ENCODE measurements at regions of chr6 and their contacts with region 1.

Region 1: DNA sequence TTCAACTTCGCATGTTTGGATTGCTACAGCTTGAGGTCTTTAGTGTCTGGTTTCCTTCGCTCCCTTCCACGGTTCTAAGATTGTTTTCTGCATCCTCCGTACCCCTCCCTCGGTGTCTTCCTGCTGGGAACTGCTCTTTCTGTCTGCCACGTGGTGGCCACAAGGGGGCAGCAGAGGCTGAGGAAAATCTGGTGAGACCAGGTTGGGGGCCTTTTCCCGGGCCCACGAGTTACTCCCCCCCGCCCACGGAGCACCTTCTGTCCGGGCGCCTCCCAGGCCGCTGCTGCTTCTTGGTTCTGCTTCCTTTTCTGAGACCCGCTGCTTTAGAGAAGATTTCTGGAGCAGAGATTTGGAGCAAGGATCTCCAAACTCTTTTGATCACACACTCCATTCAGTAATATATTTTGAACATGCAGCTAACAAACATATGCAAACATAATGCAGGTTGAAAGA is 21.1 kb upstream of the NOTCH4 start:
- DNase-seq: peak; percentile 86 to 89
- ATAC-seq: peak; percentile 90 to 96 (median 93)
- H3K4me3 ChIP-seq: peak overlapping the region in 5 of 10 donors; percentile 13 to 31 (median 20)
- H3K27ac ChIP-seq: peak overlapping the region; percentile 29 to 89 (median 70)
- H3K4me1 ChIP-seq: peaks cover 4 to 20% (median 9%) of the 10 kb centered on the region in 9 donors
- H3K27me3 ChIP-seq: no peaks in the 10 kb centered on the region
- CTCF ChIP-seq: peak; percentile 90 to 96 (median 92)

Region 2: GRCh38 chr6:32118782-32119628 is 126.0 kb before region 1 on chr6:
- intact Hi-C with region 1: loop called in 2 of 10 experiments (anchors 5 to 10 kb)
- DNase-seq: peak; percentile 86 to 88
- ATAC-seq: peak; percentile 73 to 88 (median 80)
- H3K4me3 ChIP-seq: no peak overlapping the region
- H3K27ac ChIP-seq: peak overlapping the region in 9 of 10 donors; percentile 3 to 68 (median 51)
- H3K4me1 ChIP-seq: peaks cover 7 to 34% (median 20%) of the 10 kb centered on the region in 9 donors
- H3K27me3 ChIP-seq: no peaks in the 10 kb centered on the region
- CTCF ChIP-seq: peak; percentile 80 to 97 (median 94)

Region 3: GRCh38 chr6:32393665-32394420 is 148.9 kb after region 1 on chr6:
- intact Hi-C with region 1: loop called in 5 of 10 experiments (anchors 2 to 10 kb)
- DNase-seq: peak in 1 of 2 donors; percentile 59
- ATAC-seq: peak; percentile 88 to 99 (median 96)
- H3K4me3 ChIP-seq: no peak overlapping the region
- H3K27ac ChIP-seq: peak overlapping the region in 9 of 10 donors; percentile 23 to 87 (median 61)
- H3K4me1 ChIP-seq: peaks cover 0 to 19% (median 3%) of the 10 kb centered on the region in 9 donors
- H3K27me3 ChIP-seq: peaks cover 0 to 10% (median 0%) of the 10 kb centered on the region in 7 donors
- CTCF ChIP-seq: peak in 3 of 9 donors; percentile 9 to 43 (median 28)

Region 4: GRCh38 chr6:32488083-32488482 is 243.1 kb after region 1 on chr6:
- intact Hi-C with region 1: no loop called
- DNase-seq: no peak
- ATAC-seq: peak in 3 of 8 donors; percentile 38 to 43 (median 41)
- H3K4me3 ChIP-seq: no peak overlapping the region
- H3K27ac ChIP-seq: no peak overlapping the region
- H3K4me1 ChIP-seq: no peaks in the 10 kb centered on the region
- H3K27me3 ChIP-seq: peaks cover 0 to 6% (median 0%) of the 10 kb centered on the region in 7 donors
- CTCF ChIP-seq: no peak

Region 5: DNA sequence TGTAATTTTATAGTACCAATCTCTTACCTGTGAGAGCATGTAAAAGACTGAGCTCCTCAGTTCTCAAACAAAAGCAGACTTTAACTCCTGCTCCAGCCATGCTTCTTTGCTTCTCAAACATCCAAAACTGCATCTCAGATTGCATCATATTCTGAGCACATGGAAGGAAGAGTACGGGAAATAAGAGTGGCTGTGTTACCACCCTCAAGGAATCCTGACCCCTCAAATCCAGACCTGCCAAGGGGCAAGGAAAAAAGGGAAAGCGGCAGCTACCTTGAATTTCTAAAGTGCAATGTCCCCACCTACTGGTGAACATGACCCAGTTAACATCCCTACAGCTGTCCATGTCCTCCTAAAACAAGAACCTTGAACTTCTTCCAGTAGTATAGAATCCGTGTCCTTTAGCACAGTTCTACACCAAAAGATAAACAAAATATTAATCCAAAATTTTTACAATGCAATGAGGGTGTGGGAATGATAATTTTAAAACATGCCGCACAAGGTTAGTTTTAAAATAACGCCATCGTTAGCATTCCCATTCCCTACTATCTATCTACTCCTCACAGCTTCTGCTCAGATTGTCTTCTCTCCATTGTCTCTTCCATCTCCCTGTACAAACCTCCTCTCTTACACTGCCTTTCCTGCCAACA is 455.5 kb after region 1 on chr6:
- intact Hi-C with region 1: loop called in 3 of 10 experiments (anchors 5 to 10 kb)
- DNase-seq: peak in 1 of 2 donors; percentile 58
- ATAC-seq: peak in 7 of 8 donors; percentile 61 to 92 (median 82)
- H3K4me3 ChIP-seq: no peak overlapping the region
- H3K27ac ChIP-seq: no peak overlapping the region
- H3K4me1 ChIP-seq: no peaks in the 10 kb centered on the region
- H3K27me3 ChIP-seq: peaks cover 0 to 48% (median 32%) of the 10 kb centered on the region in 7 donors
- CTCF ChIP-seq: peak in 8 of 9 donors; percentile 56 to 76 (median 71)

Measured in heart right ventricle (tissue), 16 donors.